Activated CD8-positive, alpha-beta memory T cell treated with anti-CD3 and anti-CD28 coated beads, Interleukin-2, amount 10 ng/mL, durations not matched to agents 7 days and 5 days (primary cell): ENCODE measurements at regions of chr11 and their contacts with region 1.

Region 1: GRCh38 chr11:96389720-96390487 is at the starts of genes CCDC82 and JRKL:
- DNase-seq: peak; percentile 98
- ATAC-seq: peak; percentile 96
- H3K4me3 Mint-ChIP-seq: peak within 1 kb of the TSS; percentile 87
- H3K27ac Mint-ChIP-seq: peak within 1 kb of the TSS; percentile 91
- H3K4me1 Mint-ChIP-seq: peaks cover 50% of the 10 kb centered on the region
- H3K27me3 Mint-ChIP-seq: no peaks in the 10 kb centered on the region
- total RNA-seq, gene CCDC82: 31.5 to 32.9 TPM
- total RNA-seq, gene JRKL: 9.6 to 11.2 TPM

Region 2: GRCh38 chr11:95835768-95836488 is 554.0 kb before region 1 on chr11:
- CTCF ChIA-PET with region 1: interaction called, 30 read pairs
- DNase-seq: peak; percentile 64
- ATAC-seq: peak; percentile 86
- H3K4me3 Mint-ChIP-seq: no peak overlapping the region
- H3K27ac Mint-ChIP-seq: no peak overlapping the region
- H3K4me1 Mint-ChIP-seq: no peaks in the 10 kb centered on the region
- H3K27me3 Mint-ChIP-seq: no peaks in the 10 kb centered on the region

Region 3: DNA sequence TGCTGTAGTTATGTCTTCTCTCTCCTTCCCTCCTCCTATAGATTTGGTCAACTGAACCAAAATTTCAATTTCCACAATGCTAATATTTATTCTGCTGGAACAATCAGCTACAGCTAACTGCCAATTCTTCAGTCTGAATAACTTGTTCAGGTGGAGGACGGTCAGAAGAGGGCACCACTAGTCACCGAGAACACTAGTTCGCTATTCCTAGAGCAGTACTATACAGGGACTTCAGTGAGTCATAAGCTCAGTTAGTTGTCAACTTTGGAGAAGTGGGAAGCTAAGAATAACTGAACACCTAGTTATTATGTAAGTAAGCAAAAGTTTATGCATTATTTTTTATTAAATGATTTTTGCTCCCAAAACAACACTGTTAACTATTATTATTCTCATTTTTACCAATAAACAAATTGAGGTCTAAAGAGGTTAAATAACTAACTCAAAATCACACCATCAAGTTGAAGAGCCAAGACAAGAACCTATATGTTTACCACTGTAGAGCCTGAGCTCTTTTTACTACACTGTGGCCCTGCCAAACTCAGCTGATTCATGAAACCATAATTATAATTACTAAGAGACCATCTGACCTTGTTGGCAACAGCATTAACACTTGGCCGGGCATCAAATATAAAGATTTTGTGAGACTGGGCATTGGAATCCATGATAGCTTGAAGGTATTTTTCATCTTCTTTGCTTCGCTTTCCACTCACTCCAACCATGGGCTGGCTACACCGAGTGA is 540.6 kb before region 1 on chr11:
- CTCF ChIA-PET with region 1: interaction called, 11 read pairs
- DNase-seq: no peak
- ATAC-seq: no peak
- H3K4me3 Mint-ChIP-seq: no peak overlapping the region
- H3K27ac Mint-ChIP-seq: no peak overlapping the region
- H3K4me1 Mint-ChIP-seq: no peaks in the 10 kb centered on the region
- H3K27me3 Mint-ChIP-seq: no peaks in the 10 kb centered on the region

Region 4: GRCh38 chr11:96054870-96055705 is 334.8 kb before region 1 on chr11:
- CTCF ChIA-PET with region 1: interaction called, 14 read pairs
- DNase-seq: no peak
- ATAC-seq: peak; percentile 61
- H3K4me3 Mint-ChIP-seq: no peak overlapping the region
- H3K27ac Mint-ChIP-seq: no peak overlapping the region
- H3K4me1 Mint-ChIP-seq: peaks cover 40% of the 10 kb centered on the region
- H3K27me3 Mint-ChIP-seq: no peaks in the 10 kb centered on the region